Panc1 (cell line): ENCODE measurements at regions of chr22 and their contacts with region 1.

Region 1: DNA sequence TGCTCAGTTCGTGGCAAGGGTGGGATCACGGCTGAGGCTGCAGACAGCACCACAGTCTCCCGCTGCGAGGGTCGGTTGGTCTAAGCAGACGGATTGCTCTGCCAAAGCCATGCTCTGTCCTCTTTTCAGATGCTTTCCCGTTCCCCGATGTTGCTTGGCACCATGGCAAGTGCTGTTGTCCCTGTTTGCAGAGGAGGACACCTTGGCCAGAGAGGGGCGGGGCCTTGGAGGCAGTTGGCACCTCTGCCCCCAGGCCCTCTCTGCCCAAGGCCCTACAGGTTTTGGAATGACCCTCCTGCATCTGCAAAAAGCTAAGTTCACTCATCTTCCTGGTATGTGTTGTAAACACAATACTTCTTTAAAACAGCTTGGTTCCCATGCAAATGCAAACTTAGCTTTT is 11.6 kb downstream of the CCDC157 start:
- DNase-seq: no peak
- ATAC-seq: no peak
- H3K4me3 ChIP-seq: no peak overlapping the region
- H3K27ac ChIP-seq: no peak overlapping the region
- H3K4me1 ChIP-seq: no peaks in the 10 kb centered on the region; the same call in 1 of the 2 replicates
- H3K27me3 ChIP-seq: no peaks in the 10 kb centered on the region
- CTCF ChIP-seq: no peak

Region 2: GRCh38 chr22:28817919-28818909 is 1550.2 kb before region 1 on chr22:
- CTCF ChIA-PET with region 1: no interaction called
- POLR2A ChIA-PET with region 1: interaction called, 10 read pairs
- in situ Hi-C with region 1: no loop called
- intact Hi-C with region 1: no loop called
- DNase-seq: no peak
- ATAC-seq: no peak
- H3K4me3 ChIP-seq: no peak overlapping the region
- H3K27ac ChIP-seq: no peak overlapping the region
- H3K4me1 ChIP-seq: no peaks in the 10 kb centered on the region
- H3K27me3 ChIP-seq: no peaks in the 10 kb centered on the region
- CTCF ChIP-seq: no peak

Region 3: DNA sequence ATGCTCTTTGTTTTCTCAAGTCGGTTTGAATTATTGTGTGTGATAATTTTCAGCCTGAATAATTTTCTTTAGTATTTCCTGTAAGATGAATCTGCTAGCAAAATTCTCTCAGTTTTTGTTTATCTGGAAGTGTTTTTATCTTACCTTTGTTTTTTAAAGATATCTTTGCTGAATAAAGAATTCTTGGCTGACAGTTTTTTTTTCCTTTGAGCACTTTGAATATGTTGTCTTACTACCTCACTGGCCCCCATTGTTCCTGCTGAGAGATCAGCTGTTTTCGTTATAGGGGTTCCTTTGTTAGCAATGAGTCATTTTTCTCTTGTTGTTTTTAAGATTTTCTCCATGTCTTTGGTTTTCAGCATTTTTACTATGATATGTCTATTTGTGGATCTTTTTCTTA is 225.2 kb before region 1 on chr22:
- CTCF ChIA-PET with region 1: no interaction called
- POLR2A ChIA-PET with region 1: no interaction called
- in situ Hi-C with region 1: no loop called
- intact Hi-C with region 1: no loop called
- DNase-seq: no peak
- ATAC-seq: no peak
- H3K4me3 ChIP-seq: no peak overlapping the region
- H3K27ac ChIP-seq: no peak overlapping the region
- H3K4me1 ChIP-seq: no peaks in the 10 kb centered on the region
- H3K27me3 ChIP-seq: no peaks in the 10 kb centered on the region
- CTCF ChIP-seq: no peak